HCT116 (cell line): ENCODE measurements at regions of chr7 and their contacts with region 1.

Region 1: DNA sequence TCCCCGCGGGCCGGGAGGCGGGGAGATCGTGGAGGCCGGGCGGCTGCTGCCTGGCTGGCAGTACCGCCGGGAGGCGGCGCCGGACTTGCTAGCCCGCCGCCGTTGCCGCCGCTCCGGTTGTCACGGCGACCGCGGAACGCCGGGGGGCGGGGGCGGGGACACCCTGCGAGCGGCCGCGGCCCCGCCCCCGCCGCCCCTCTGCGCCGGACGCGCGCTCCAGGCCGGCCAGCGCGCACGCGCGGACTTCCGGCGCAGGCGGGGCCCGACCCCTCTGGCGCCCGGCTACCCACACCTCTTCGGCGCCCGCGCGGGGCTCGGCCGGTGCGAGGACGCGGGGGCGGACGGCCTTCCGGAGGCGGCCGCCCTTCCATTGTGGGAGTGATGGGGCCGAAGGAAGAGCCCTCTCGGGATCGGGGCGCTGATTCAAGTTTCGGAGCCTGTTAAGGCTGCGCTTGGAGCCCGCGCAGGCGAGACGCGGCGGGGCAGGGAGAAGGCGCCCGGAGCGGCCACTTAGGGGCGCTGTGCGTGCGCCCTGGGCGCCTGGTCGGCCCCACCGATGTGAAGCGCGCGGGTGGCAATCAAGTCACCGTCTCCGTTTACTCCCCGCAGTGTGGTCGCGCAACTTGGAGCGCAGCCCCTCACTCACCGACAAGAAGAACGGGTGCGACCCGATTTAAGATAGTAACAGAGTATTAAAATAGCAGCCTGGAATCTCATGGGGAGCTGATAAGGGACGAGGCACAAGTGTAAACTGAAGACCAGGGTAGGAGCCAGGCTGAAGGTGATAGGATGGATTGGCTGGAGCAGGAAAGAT is 448 bp upstream of the DPY19L1 start:
- DNase-seq: peak; percentile 74
- ATAC-seq: peak; percentile 88
- H3K4me3 ChIP-seq: peak overlapping the region; percentile 48 to 64
- H3K27ac ChIP-seq: peak overlapping the region; percentile 94
- H3K4me1 ChIP-seq: peaks cover 14 to 28% of the 10 kb centered on the region in 2 experiments
- H3K27me3 ChIP-seq: no peaks in the 10 kb centered on the region
- CTCF ChIP-seq: peak; percentile 53 to 87 (median 82)
- POLR2A ChIP-seq: peak; percentile 11
- RAD21 ChIP-seq: peak; percentile 68

Region 2: DNA sequence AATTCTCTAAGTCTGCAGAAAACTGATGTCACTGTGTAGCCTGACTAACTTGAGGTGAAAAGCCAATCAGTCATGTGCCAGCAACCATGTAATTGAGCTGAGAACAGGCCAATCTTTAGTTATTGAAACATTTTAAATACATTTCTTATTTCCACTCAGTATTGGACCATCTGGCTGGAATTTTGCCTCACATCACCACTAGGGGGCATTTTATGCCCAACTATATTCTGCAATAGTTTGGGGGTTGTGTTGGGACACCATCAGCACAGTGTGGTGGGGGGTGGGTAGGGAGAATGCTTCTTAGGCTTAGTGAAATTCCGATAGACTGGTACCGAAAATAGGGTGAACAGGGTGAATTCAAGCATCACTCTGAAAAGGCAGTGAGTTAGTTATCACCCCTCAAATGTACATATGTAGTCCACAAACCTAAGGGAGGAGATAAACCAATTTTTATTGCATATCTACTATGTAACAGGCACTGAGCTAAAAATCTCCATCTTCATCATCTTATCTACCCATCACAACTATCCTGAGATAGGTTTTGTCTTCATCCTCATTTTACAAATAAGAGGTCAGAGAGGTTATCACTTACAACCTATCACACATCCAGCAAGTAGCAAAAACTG is 361.9 kb before region 1 on chr7:
- CTCF ChIA-PET with region 1: no interaction called
- POLR2A ChIA-PET with region 1: no interaction called
- RAD21 ChIA-PET with region 1: no interaction called
- intact Hi-C with region 1: loop called (anchors 10 kb)
- DNase-seq: peak; percentile 13
- ATAC-seq: peak; percentile 94
- H3K4me3 ChIP-seq: no peak overlapping the region
- H3K27ac ChIP-seq: no peak overlapping the region
- H3K4me1 ChIP-seq: no peaks in the 10 kb centered on the region
- H3K27me3 ChIP-seq: no peaks in the 10 kb centered on the region
- CTCF ChIP-seq: peak; percentile 55 to 84 (median 74); a peak in 5 of 6 replicates
- POLR2A ChIP-seq: no peak
- RAD21 ChIP-seq: peak; percentile 80

Region 3: DNA sequence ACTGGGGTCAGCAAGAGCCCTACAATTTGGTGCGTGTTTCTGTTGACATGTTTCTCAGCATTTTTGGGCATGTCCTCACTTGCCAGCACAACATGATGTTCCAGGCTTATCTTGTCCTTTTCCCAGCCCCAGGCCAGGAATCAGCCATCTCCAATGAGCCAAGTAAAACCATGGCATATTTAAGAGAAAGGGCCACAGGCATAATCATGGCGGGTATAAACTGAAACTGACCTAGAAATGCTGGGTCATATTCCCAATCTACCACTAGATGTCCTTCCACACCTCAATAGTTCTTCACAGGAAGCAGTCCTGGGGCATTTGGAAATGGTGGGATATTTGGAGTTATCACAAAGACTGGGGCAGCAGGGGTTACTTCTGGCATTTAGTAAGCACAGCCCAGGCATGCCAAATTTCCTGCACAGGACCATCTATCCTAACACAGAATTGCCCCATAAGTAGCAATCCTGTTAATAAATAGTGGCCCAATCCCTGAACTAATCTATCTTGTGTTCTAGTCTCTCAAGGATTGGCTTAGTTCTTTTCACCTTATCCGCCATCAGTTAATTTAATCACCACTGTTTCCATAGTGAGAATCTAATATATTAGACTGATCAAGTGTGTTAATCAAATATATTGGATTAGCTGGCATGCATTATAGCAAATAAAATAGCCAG is 278.1 kb before region 1 on chr7:
- CTCF ChIA-PET with region 1: interaction called, 3 read pairs
- POLR2A ChIA-PET with region 1: no interaction called
- RAD21 ChIA-PET with region 1: no interaction called
- intact Hi-C with region 1: loop called (anchors 1 kb)
- DNase-seq: peak; percentile 48
- ATAC-seq: peak; percentile 92
- H3K4me3 ChIP-seq: no peak overlapping the region
- H3K27ac ChIP-seq: no peak overlapping the region
- H3K4me1 ChIP-seq: peaks cover 0 to 7% of the 10 kb centered on the region in 2 experiments; a peak in 1 of 4 replicates
- H3K27me3 ChIP-seq: no peaks in the 10 kb centered on the region
- CTCF ChIP-seq: peak; percentile 51 to 71 (median 68); a peak in 5 of 6 replicates
- POLR2A ChIP-seq: no peak
- RAD21 ChIP-seq: peak; percentile 79

Region 4: DNA sequence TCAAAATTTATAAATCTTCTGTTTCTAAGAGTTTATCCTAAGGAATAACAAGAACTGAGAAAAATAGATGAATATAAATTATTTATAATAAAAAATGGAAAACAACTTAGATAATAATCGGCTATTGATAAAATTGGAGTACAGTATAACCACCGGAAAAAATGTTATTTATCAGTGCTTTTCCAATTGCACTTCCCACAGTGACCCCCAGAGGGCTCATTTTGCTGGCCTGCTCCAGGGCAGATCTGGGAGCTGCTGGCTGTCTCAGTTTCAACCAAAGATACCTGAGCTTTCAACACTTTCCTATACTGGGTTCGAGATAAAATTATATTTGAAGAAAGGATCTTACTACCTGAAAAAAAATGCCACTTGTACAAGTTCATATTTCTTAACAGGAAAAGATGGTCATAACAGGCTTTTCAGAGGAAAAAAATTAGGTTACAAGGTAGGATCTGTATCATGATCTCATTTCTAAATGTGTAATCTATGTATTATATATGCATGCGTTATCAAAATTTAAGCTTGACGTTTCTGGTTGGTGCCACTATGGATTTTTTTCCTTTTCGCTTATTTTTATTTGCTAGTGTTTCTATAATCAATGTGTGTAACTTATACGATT is 214.0 kb before region 1 on chr7:
- CTCF ChIA-PET with region 1: no interaction called
- POLR2A ChIA-PET with region 1: no interaction called
- RAD21 ChIA-PET with region 1: no interaction called
- intact Hi-C with region 1: loop called (anchors 1 kb)
- DNase-seq: peak; percentile 41
- ATAC-seq: peak; percentile 77
- H3K4me3 ChIP-seq: no peak overlapping the region
- H3K27ac ChIP-seq: no peak overlapping the region
- H3K4me1 ChIP-seq: peaks cover 8 to 28% of the 10 kb centered on the region in 2 experiments
- H3K27me3 ChIP-seq: no peaks in the 10 kb centered on the region
- CTCF ChIP-seq: peak; percentile 73 to 85 (median 75)
- POLR2A ChIP-seq: no peak
- RAD21 ChIP-seq: peak; percentile 83

Region 5: DNA sequence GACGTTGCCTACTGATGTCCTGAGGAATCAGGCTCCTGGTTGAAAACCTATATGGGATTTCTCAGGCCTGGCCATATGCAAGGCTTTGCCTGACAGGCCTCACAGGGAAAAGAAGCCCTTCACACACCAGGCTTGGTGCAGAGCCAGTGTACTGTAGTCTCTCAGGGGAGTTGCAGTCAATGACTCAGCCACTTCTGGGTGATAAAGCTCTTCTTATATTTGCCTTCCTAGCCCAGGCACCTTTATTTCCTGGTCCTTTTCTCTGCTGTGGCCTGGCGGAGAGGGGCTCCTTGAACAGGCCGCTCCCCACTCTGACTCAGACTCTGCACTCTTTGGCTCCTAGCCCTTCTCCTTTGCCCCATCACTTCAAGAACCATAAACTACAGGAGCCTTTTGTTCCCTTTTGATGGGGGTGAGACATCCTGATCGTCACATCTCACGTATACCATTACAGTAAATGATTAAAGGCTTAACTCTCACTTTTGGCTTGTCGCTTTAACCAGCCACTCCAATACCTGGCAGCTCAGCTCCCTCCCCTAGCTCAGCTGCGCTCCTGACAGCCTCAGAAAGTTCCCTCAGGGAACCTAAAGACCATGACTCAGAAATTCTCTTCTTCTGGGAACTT is 33.9 kb before region 1 on chr7:
- CTCF ChIA-PET with region 1: interaction called, 3 read pairs
- POLR2A ChIA-PET with region 1: no interaction called
- RAD21 ChIA-PET with region 1: no interaction called
- intact Hi-C with region 1: loop called (anchors 2 kb)
- DNase-seq: peak; percentile 99
- ATAC-seq: peak; percentile 91
- H3K4me3 ChIP-seq: peak overlapping the region in 1 of 2 experiments; percentile 33; a peak in 2 of 4 replicates
- H3K27ac ChIP-seq: peak overlapping the region; percentile 99
- H3K4me1 ChIP-seq: peaks cover 54 to 63% of the 10 kb centered on the region in 2 experiments
- H3K27me3 ChIP-seq: no peaks in the 10 kb centered on the region
- CTCF ChIP-seq: no peak
- POLR2A ChIP-seq: no peak
- RAD21 ChIP-seq: peak; percentile 28

Region 6: DNA sequence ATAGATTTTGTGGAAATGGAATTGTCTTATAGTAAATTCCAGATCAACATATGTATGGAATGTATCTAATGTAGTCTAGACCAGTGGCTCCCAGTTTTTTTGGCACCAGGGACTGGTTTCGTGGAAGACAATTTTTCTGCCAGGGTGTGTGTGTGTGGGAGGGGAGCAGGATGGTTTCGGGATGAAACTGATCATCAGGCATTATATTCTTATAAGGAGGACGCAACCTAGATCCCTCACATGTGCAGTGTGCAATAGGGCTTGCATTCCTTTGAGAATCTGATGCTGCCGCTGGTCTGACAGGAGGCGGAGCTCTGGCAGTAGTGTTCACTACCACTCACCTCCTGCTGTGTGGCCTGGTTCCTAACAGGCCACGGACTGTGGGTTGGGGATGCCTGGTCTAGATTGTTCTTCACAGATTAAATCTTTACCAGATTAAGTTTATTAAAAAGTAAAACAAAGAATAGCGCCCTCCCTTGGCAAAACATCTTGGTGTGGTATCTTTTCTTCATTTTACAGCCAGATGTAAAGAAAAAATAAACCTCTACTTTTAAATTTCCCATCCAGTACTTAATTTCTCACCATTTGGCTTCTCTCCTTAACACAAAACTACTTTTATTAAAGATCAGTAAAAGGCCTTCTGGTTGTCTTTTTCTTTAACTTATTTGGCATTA is 811.6 kb after region 1 on chr7:
- CTCF ChIA-PET with region 1: no interaction called
- POLR2A ChIA-PET with region 1: no interaction called
- RAD21 ChIA-PET with region 1: no interaction called
- intact Hi-C with region 1: no loop called
- DNase-seq: no peak
- ATAC-seq: no peak
- H3K4me3 ChIP-seq: no peak overlapping the region
- H3K27ac ChIP-seq: no peak overlapping the region
- H3K4me1 ChIP-seq: no peaks in the 10 kb centered on the region
- H3K27me3 ChIP-seq: no peaks in the 10 kb centered on the region
- CTCF ChIP-seq: peak in 1 of 3 experiments; percentile 38; a peak in 2 of 6 replicates
- POLR2A ChIP-seq: no peak
- RAD21 ChIP-seq: no peak